ENCODE measurements at regions of chr1 and their contacts with region 1.

Region 1: GRCh38 chr1:15788624-15789301 is 18.7 kb downstream of the UQCRHL start:
- DNase-seq: no peak
- H3K4me3 ChIP-seq: no peak overlapping the region
- H3K27ac ChIP-seq: no peak overlapping the region
- H3K4me1 ChIP-seq: no peaks in the 10 kb centered on the region
- H3K27me3 ChIP-seq: no peaks in the 10 kb centered on the region; a peak in 1 of 7 replicates
- CTCF ChIP-seq: no peak
- EP300 ChIP-seq: no peak
- POLR2A ChIP-seq: no peak
- RAD21 ChIP-seq: no peak

Region 2: DNA sequence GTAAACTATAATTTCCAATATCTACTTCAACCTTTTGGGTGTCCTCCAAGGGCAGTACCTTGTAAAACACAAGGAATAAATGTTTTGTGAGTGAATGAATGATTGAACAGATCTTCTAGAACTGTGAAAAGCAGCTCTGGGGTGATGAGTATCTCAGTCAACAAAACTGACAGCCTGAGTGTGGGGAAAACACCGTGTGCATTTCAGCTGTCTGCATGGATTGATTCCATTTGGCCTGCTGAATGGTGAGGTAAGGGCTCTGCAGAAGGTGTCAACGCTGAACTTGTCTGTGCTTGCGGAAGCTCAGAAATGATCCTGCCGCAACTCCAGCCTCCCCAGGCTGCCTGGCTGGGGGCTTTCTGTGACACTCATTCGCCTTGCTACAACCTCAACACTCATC is 196.5 kb before region 1 on chr1:
- CTCF ChIA-PET with region 1: no interaction called
- POLR2A ChIA-PET with region 1: no interaction called
- DNase-seq: no peak
- H3K4me3 ChIP-seq: no peak overlapping the region
- H3K27ac ChIP-seq: no peak overlapping the region
- H3K4me1 ChIP-seq: peaks cover 0 to 5% (median 1%) of the 10 kb centered on the region in 4 experiments; a peak in 2 of 7 replicates
- H3K27me3 ChIP-seq: no peaks in the 10 kb centered on the region
- CTCF ChIP-seq: no peak
- EP300 ChIP-seq: no peak
- POLR2A ChIP-seq: no peak
- RAD21 ChIP-seq: no peak

Region 3: DNA sequence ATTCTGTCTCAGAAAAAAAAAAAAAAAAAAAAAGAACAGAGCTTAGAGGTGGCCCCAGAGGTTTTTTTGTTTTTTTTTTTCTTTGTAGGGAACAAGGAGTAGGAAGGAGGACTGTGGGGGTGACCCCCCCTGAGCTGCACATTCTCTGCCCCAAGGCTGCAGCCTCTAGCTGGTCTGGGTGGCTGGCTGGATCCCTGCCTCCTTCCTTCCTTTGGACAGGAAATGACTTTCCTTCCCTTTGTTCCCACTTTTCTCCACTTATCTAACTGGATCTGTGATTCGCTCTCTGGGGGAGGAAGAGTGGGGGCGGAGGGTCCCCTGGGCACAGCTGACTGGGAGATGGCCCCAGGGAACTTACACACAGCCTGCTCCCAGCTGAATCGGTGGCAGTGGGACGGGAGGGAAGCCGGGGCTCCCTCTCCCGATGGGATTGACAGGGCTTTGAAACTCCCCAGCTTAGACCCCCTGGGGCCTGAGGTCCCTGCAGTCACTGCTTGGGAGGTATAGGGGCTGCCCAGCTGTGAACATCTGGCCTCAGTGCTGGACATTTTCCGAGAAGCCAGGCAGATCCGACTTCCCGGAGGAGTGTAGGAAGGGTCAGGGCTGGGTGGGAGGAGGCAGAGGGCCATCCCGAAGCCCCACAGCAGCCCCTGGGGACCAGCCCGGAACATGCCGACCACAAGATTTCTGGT is 28.1 kb before region 1 on chr1:
- CTCF ChIA-PET with region 1: interaction called, 13 read pairs
- POLR2A ChIA-PET with region 1: interaction called, 9 read pairs
- DNase-seq: no peak
- H3K4me3 ChIP-seq: peak overlapping the region in 2 of 4 experiments; percentile 1 to 31; a peak in 3 of 8 replicates
- H3K27ac ChIP-seq: no peak overlapping the region
- H3K4me1 ChIP-seq: peaks cover 9 to 31% (median 27%) of the 10 kb centered on the region in 4 experiments
- H3K27me3 ChIP-seq: no peaks in the 10 kb centered on the region
- CTCF ChIP-seq: no peak
- EP300 ChIP-seq: no peak
- POLR2A ChIP-seq: no peak
- RAD21 ChIP-seq: peak; percentile 11 to 26; a peak in 1 of 4 replicates

Region 4: DNA sequence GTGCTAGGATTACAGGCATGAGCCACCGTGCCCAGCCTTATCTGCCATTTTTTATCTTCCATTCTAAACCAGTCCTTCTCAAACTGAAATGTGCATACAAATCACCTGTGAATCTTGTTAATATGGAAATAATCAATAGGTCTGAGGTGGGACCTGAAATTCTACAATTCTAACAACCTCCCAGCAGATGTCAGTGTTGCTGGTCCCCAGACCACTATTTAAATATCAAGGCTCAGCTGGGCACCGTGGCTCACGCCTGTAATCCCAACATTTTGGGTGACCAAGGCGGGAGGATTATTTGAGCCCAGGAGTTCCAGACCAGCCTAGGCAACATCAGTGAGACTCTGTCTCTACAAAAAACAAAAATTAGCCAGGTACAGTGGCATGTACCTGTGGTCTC is 14.6 kb after region 1 on chr1:
- CTCF ChIA-PET with region 1: interaction called, 15 read pairs
- POLR2A ChIA-PET with region 1: interaction called, 5 read pairs
- DNase-seq: peak in 1 of 2 experiments; percentile 68
- H3K4me3 ChIP-seq: no peak overlapping the region
- H3K27ac ChIP-seq: no peak overlapping the region
- H3K4me1 ChIP-seq: peaks cover 0 to 18% (median 12%) of the 10 kb centered on the region in 4 experiments; a peak in 6 of 7 replicates
- H3K27me3 ChIP-seq: no peaks in the 10 kb centered on the region
- CTCF ChIP-seq: peak; percentile 19 to 67 (median 55)
- EP300 ChIP-seq: no peak
- POLR2A ChIP-seq: no peak
- RAD21 ChIP-seq: peak; percentile 66 to 81

Region 5: DNA sequence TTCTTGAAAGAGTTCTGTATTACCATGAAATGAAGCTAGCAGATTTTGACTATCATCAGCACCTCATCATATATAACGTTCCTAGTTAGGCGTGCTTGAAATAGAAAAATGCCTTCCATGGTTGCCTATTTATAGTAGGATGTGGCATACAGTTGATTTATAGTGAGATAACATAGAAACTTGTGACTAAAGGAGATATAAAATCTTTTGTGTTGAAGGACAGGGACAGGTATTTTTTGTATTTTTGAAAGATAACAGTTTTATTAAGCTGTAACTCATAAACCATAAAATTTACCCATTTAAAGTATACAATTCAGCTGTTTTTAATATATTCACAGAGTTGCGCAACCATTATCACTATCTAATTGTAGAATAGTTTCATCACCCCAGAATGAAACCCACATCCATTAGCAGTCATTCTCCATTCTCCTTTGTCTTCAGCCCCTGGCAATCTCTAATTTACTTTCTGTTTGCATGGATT is 78.0 kb after region 1 on chr1:
- CTCF ChIA-PET with region 1: interaction called, 10 read pairs
- POLR2A ChIA-PET with region 1: no interaction called
- DNase-seq: no peak
- H3K4me3 ChIP-seq: no peak overlapping the region
- H3K27ac ChIP-seq: no peak overlapping the region
- H3K4me1 ChIP-seq: no peaks in the 10 kb centered on the region
- H3K27me3 ChIP-seq: no peaks in the 10 kb centered on the region
- CTCF ChIP-seq: no peak
- EP300 ChIP-seq: no peak
- POLR2A ChIP-seq: no peak
- RAD21 ChIP-seq: no peak

Region 6: GRCh38 chr1:15957228-15958095 is 168.7 kb after region 1 on chr1:
- CTCF ChIA-PET with region 1: interaction called, 18 read pairs
- POLR2A ChIA-PET with region 1: interaction called, 3 read pairs
- DNase-seq: peak in 1 of 2 experiments; percentile 76
- H3K4me3 ChIP-seq: no peak overlapping the region
- H3K27ac ChIP-seq: no peak overlapping the region
- H3K4me1 ChIP-seq: peaks cover 6 to 18% (median 11%) of the 10 kb centered on the region in 4 experiments
- H3K27me3 ChIP-seq: peaks cover 0 to 3% (median under 1%) of the 10 kb centered on the region in 4 experiments; a peak in 2 of 7 replicates
- CTCF ChIP-seq: peak; percentile 52 to 75 (median 72)
- EP300 ChIP-seq: no peak
- POLR2A ChIP-seq: no peak
- RAD21 ChIP-seq: peak; percentile 34 to 60; a peak in 3 of 4 replicates

Region 7: GRCh38 chr1:16155532-16156410 is 367.0 kb after region 1 on chr1 and contains the start of gene EPHA2:
- CTCF ChIA-PET with region 1: no interaction called
- POLR2A ChIA-PET with region 1: no interaction called
- DNase-seq: peak; percentile 75 to 96
- H3K4me3 ChIP-seq: peak within 1 kb of the TSS; percentile 70 to 87 (median 81)
- H3K27ac ChIP-seq: peak within 1 kb of the TSS; percentile 53; the same call in 1 of the 2 replicates
- H3K4me1 ChIP-seq: peaks cover 5 to 41% (median 30%) of the 10 kb centered on the region in 4 experiments
- H3K27me3 ChIP-seq: peaks cover 0 to 10% (median 6%) of the 10 kb centered on the region in 4 experiments; a peak in 4 of 7 replicates
- CTCF ChIP-seq: no peak
- EP300 ChIP-seq: peak in 1 of 2 experiments; percentile 68; a peak in 1 of 3 replicates
- POLR2A ChIP-seq: peak in 1 of 2 experiments; percentile 95; a peak in 2 of 3 replicates
- RAD21 ChIP-seq: 0 out of 4 replicates have a peak, but pooled peaks of 1 of the 2 experiments have one; percentile 1
- total RNA-seq, gene EPHA2: 28.4 and 33.6 TPM in 2 replicates

Measured in H1 (cell line).